ENCODE measurements at regions of chr2 and their contacts with region 1.

Region 1: DNA sequence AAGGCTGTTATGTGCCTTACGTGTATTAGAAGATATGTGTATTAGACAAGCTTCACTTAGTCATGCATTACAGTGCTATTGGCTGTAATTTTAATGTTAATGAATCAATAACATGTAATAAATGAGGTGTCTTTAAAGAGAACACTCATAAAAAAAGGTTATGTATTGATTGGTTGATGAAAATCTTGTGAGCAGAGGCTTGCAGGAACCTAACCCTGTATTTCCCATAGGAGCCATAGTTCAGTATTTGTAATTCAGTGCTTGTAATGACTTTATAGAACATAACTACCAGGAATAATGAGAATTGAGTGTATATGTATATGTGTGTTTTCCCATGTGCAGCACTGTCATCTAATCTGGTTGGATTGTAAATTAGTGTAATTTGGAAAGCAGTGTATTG is 33.2 kb downstream of the TSN start:
- DNase-seq: no peak
- H3K4me3 ChIP-seq: no peak overlapping the region
- H3K27ac ChIP-seq: no peak overlapping the region
- H3K4me1 ChIP-seq: no peaks in the 10 kb centered on the region
- H3K27me3 ChIP-seq: peaks cover 2% of the 10 kb centered on the region
- CTCF ChIP-seq: no peak
- EP300 ChIP-seq: no peak
- POLR2A ChIP-seq: no peak

Region 2: GRCh38 chr2:120499784-120500495 is 1288.7 kb before region 1 on chr2:
- in situ Hi-C with region 1: no loop called
- intact Hi-C with region 1: loop called (anchors 5 kb)
- DNase-seq: no peak
- H3K4me3 ChIP-seq: no peak overlapping the region
- H3K27ac ChIP-seq: no peak overlapping the region
- H3K4me1 ChIP-seq: no peaks in the 10 kb centered on the region
- H3K27me3 ChIP-seq: peaks cover 4% of the 10 kb centered on the region
- CTCF ChIP-seq: no peak
- EP300 ChIP-seq: no peak
- POLR2A ChIP-seq: no peak